KBM-7 (cell line): ENCODE measurements at regions of chr10 and their contacts with region 1.

Region 1: DNA sequence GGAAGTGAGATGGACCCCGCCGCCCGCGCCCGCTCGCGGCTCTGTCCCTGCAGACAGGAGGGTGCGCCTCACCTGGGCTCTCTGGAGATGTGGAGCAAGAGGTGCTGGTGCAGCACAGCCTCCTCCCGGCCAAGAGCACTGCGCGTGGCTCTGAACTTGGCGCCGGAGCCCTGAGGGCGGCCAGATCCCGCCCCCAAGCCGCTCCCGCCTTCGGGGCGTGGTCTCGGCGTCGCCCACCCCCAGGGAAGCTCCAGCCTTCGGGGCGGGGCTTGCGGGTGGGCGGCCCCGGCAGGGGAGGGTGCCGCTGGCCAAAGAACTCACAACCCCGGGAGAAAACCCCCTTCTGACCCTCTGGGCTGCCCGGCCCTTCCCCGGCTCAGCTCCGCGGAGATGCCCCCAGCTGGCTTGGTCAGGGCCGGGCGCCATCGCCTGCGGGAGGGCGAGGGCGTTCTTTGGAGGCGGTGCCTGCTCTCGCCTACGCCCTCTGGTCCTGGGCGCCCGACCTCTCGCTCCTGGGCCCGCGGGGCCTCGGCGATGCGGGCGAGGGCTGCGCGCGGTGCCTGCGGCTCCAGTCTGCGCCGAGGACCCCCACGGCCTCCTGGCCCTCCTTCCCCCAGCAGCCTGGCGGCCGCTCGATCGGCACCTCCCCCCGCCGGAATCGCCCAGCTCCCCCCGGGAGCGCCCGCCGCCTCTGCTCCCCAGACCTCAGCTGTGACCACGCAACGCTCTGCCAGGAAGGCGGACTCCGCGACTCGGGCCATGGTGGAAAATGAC is at the start of gene ZNF488:
- DNase-seq: peak; percentile 83

Region 2: DNA sequence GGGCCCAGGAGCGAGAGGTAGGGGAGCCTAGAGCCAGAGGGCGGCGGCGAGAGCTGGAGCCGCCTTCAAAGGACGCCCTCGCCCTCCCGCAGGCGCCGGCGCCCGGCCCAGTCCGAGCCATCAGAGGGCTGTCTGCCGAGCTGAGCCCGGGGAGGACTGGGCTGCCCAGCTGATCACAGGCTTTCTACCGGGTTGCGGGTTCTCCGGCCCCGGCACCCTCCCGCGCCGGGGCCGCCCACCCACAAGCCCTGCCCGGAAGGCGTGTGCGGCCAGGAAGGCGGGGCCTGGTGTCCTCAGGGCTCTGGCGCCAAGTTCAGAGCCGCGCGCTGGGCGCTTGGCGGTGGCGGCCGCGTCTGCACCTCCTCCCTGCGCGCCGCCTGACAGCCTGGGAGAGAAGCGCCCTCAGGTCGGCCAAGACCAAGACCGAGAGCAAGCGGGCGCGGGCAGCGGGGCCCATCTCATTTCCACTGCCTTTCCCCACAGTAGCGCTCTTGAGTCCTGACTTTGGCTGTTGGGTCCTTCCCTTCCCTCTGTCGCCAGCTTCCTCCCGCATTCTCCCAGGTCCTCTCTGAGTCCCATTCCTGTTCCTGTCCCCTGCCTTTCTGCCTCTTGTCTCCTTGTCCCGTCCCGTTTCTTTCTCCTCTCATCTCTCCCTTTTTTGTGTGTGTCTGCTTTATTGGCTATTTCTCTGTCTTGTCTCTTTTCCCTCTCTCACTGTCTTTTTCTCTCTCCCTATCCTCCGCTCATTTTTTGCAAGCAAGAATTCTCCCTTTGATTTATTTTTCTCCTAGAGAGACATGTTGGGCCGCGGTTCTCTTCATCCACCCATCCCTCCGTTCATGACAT is 1277.7 kb before region 1 on chr10:
- in situ Hi-C with region 1: loop called (anchors 5 kb)
- DNase-seq: peak; percentile 78

Region 3: GRCh38 chr10:46284293-46285229 is 1099.8 kb before region 1 on chr10:
- in situ Hi-C with region 1: loop called (anchors 10 kb)
- DNase-seq: peak; percentile 89